Colonic mucosa (tissue), 4 donors: ENCODE measurements at regions of chr11 and their contacts with region 1.

Region 1: DNA sequence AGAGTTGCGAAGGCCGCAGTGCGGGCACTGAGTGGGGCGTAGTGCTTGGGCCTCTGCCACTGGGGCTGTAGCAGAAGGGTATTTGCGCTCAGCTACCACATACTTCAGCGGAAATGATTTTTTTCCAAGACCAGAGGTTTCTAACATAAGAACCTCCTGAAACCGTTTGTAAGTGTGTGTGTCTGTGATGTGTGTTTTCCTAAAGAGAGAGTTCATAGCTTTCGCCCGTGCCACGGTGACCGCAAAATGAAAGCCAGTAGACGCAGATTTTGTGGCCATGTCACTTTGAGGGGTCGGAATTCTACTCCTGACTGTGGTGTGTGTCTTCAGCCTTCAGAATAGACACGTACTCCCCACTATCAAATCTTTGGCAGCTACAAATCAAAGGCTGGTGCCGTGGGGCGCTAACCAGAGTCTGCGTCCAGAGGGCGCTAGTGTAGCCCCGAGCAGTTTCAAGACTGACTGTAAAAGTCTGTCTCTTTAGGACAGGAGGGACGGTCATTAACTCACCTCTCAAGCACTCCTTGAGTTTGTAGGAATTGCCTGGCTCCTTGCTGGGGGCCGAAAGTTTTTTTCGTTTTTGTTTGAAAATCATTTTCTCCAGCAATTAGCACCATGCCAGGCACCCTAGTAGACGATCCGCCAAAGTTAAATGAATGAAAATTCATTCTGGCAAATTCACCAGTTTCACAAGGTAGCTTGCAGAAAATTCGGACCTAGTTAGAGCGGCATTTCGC is 2.5 kb upstream of the CALCA start:
- DNase-seq: peak; percentile 55
- H3K4me3 ChIP-seq: peak overlapping the region; percentile 25
- H3K27ac ChIP-seq: no peak overlapping the region
- H3K4me1 ChIP-seq: peaks cover 8% of the 10 kb centered on the region
- H3K27me3 ChIP-seq: peaks cover 54% of the 10 kb centered on the region
- CTCF ChIP-seq: peak; percentile 56

Region 2: GRCh38 chr11:15093432-15093831 is 118.7 kb after region 1 on chr11:
- intact Hi-C with region 1: no loop called
- DNase-seq: no peak
- H3K4me3 ChIP-seq: no peak overlapping the region
- H3K27ac ChIP-seq: no peak overlapping the region
- H3K4me1 ChIP-seq: no peaks in the 10 kb centered on the region
- H3K27me3 ChIP-seq: no peaks in the 10 kb centered on the region
- CTCF ChIP-seq: no peak

Region 3: GRCh38 chr11:15199693-15200092 is 225.0 kb after region 1 on chr11:
- intact Hi-C with region 1: loop called (anchors 10 kb)
- DNase-seq: no peak
- H3K4me3 ChIP-seq: no peak overlapping the region
- H3K27ac ChIP-seq: no peak overlapping the region
- H3K4me1 ChIP-seq: no peaks in the 10 kb centered on the region
- H3K27me3 ChIP-seq: no peaks in the 10 kb centered on the region
- CTCF ChIP-seq: no peak